Activated naive CD4-positive, alpha-beta T cell treated with anti-CD3 and anti-CD28 coated beads for 36 hours (primary cell): ENCODE measurements at regions of chr7 and their contacts with region 1.

Region 1: GRCh38 chr7:77393269-77393668 is 22.9 kb downstream of the GSAP start:
- DNase-seq: peak; percentile 77
- H3K4me3 Mint-ChIP-seq: no peak overlapping the region
- H3K27ac Mint-ChIP-seq: peak overlapping the region; percentile 63
- H3K4me1 Mint-ChIP-seq: peaks cover 37% of the 10 kb centered on the region
- H3K27me3 Mint-ChIP-seq: no peaks in the 10 kb centered on the region

Region 2: DNA sequence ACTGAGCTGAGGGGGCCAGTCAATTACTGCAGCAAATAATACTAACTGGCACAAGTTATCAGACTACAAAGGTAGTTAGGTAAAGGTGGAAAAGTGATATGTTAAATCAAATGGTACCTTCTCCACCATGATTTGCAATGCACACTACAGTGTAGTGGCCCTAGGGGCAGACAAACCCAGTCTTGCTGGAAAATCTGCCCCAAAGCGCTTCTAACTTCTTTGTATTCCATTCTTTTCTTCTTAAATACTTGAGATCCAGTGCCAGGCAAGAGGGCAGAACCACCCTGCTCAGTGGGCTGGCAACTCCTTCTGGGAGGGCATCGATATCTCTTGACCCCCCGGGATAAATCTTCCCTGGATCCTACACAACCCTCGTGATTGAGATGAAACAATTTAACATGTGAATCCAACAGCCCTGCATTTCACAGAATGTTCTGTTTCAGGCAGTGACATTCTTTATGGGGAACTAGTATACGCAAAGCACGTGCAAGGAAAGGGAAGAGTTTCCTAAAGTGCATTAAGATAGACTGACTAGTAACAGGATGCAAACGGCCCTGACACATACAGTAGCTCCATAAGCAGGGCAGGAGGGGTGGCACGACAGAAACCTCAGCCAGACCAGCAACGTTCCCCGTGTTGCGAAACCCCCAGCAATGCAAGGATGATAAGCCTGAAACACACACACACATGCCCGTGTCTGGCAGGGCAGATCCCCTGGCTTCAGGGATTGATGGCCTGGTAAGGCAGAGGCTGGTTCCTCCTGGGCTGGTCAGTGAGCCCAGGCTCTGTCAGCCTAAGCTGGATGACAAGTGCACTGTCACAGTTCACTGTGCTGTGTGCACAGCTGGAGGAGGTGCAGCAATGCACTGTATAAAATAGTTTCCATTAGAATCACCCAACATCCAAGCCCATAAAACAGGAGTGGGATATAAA is 66.3 kb before region 1 on chr7:
- CTCF ChIA-PET with region 1: no interaction called
- intact Hi-C with region 1: loop called (anchors 1 kb)
- DNase-seq: no peak
- H3K4me3 Mint-ChIP-seq: no peak overlapping the region
- H3K27ac Mint-ChIP-seq: no peak overlapping the region
- H3K4me1 Mint-ChIP-seq: peaks cover 54% of the 10 kb centered on the region
- H3K27me3 Mint-ChIP-seq: no peaks in the 10 kb centered on the region

Region 3: GRCh38 chr7:77351539-77352004 is 41.7 kb before region 1 on chr7:
- CTCF ChIA-PET with region 1: no interaction called
- intact Hi-C with region 1: loop called (anchors 1 kb)
- DNase-seq: peak; percentile 54
- H3K4me3 Mint-ChIP-seq: peak overlapping the region; percentile 51
- H3K27ac Mint-ChIP-seq: peak overlapping the region; percentile 37
- H3K4me1 Mint-ChIP-seq: peaks cover 55% of the 10 kb centered on the region
- H3K27me3 Mint-ChIP-seq: no peaks in the 10 kb centered on the region

Region 4: DNA sequence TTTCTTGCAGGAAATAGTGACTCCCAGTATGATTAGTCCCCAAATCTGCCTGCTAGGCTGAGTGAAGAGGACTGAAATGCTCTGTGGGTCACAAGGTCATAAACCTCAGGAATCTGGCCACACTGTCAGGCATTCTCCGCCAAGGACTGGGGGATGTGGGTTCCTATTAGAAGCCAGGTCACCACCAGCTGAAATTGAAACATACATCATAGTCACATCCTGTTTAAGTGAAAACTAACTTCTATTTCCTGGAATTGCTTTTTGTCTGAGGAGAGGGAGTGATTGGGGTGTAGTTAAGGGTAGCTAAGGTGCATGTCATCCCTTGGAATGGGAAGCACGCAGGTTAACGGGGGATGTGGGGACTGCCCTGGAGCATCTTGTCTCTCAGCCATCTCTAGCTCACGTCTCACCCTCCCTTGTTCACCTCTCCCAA is 34.8 kb after region 1 on chr7:
- CTCF ChIA-PET with region 1: interaction called, 5 read pairs
- intact Hi-C with region 1: loop called (anchors 1 kb)
- DNase-seq: peak; percentile 47
- H3K4me3 Mint-ChIP-seq: peak overlapping the region; percentile 36
- H3K27ac Mint-ChIP-seq: peak overlapping the region; percentile 10
- H3K4me1 Mint-ChIP-seq: peaks cover 31% of the 10 kb centered on the region
- H3K27me3 Mint-ChIP-seq: peaks cover 2% of the 10 kb centered on the region